Posterior vena cava (tissue), 2 donors: ENCODE measurements at regions of chr6 and their contacts with region 1.

Region 1: GRCh38 chr6:31070711-31071197 is 41.6 kb downstream of the C6orf15 start:
- DNase-seq: no peak

Region 2: DNA sequence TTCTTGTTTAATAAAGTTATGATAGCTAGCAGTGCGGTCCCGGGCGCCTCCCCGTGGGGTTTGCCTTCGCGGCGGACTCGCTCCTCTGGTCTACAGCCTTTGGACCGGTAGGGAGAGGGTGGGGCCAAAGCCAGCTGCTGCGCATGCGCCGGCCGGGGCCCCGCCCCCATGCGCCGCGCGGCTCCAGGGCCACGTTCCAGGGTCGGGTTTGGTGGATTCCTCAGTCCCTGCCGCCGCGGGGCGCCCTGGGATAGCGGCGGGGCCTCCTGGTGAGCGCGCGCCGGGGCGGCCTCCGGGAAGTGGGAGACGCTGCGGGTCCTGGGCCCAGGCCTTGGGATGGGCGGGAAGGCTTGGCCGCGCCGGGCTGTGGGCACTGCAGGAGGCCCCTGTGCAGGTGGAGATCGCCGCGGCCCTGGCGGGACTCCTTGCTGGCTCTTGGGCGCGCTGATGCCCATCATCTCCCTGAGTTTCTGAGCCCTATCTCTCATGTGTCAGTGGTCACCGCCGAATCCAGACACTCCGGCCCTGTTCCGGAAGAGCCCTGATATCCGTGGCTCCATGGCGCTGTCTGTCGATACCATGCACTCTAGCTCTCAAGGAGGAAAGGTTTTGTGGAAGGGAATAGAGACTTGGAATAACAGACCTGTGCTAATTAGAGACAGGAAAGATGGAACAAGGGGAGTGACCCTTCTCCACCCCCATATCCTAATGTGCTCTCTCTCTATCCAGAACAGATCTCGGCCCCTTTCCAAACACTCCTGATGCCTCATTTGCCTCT is 156.5 kb before region 1 on chr6 and contains the start of gene VARS2:
- intact Hi-C with region 1: loop called (anchors 5 kb)
- DNase-seq: peak; percentile 96
- total RNA-seq, gene VARS2: 13.8 to 17.8 TPM